Activated CD8-positive, alpha-beta T cell treated with anti-CD3 and anti-CD28 coated beads for 36 hours (primary cell): ENCODE measurements at regions of chr9 and their contacts with region 1.

Region 1: DNA sequence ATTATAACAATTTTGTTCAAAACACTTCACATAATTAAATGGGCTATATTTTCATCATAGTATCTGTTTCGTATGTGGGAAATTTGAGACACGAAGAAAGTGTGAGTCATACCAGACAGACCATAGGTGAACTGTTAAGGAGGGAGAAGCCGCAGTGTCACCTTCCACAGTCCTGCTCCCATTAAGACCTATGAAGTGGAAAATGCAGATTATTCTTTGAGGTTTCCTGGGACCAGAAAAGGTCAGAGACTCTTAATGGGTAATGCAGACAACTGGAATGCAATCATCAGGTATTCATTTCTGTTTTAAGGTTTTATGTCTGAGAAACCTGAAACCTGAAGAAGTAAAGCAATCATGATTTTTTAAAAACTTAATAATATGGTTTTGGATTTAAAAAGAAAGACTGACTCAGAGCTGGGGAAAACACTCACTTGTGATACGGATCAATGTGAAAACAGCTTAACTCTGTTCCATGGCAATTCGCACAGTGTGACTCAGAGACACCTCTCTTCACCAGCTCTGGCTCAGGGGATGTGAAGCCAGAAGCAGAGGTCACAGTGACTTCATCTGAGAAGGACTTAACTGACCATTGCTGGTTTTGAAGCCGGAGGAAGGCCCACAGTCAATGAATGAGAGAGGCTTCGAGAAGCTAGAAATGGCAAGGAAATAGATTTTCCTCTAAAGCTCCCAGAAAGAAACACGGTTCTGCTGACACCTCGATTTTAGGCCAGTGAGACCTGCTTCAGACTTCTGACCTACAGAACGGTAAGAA is 17.2 kb upstream of the GCNT1 start:
- DNase-seq: peak; percentile 67
- ATAC-seq: peak; percentile 82
- H3K4me3 Mint-ChIP-seq: peak overlapping the region; percentile 61
- H3K27ac Mint-ChIP-seq: peak overlapping the region; percentile 87
- H3K4me1 Mint-ChIP-seq: peaks cover 46% of the 10 kb centered on the region
- H3K27me3 Mint-ChIP-seq: peaks cover 3% of the 10 kb centered on the region
- CTCF ChIP-seq: no peak

Region 2: GRCh38 chr9:76393963-76394679 is 47.6 kb before region 1 on chr9 and contains the start of gene RFK:
- CTCF ChIA-PET with region 1: interaction called, 13 read pairs
- POLR2A ChIA-PET with region 1: interaction called, 4 read pairs
- intact Hi-C with region 1: no loop called
- DNase-seq: peak; percentile 92
- ATAC-seq: peak; percentile 89
- H3K4me3 Mint-ChIP-seq: peak within 1 kb of the TSS; percentile 85
- H3K27ac Mint-ChIP-seq: peak within 1 kb of the TSS; percentile 94
- H3K4me1 Mint-ChIP-seq: peaks cover 27% of the 10 kb centered on the region
- H3K27me3 Mint-ChIP-seq: no peaks in the 10 kb centered on the region
- CTCF ChIP-seq: peak; percentile 29
- total RNA-seq, gene RFK: 6.4 to 9.3 TPM

Region 3: DNA sequence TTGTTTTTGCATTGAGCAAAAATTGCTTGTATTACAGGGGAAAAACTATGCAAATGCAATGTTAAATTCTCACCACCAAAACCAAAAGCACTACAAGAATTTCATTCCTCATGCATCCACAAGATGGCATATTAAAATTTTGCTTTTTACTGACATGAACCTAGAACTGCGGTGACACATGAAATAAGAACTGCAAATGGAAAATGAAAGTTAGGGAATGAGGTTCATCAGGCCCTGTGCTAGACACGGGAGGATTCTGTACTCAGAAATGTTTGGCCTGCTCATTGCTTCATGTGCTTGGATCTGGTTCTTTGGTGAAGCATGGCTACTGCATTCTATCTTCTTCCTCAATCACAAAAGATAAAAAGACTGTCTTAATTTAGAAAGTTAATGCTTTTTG is 38.4 kb before region 1 on chr9:
- CTCF ChIA-PET with region 1: interaction called, 11 read pairs
- POLR2A ChIA-PET with region 1: no interaction called
- intact Hi-C with region 1: loop called (anchors 2 kb)
- DNase-seq: peak; percentile 22
- ATAC-seq: peak; percentile 92
- H3K4me3 Mint-ChIP-seq: no peak overlapping the region
- H3K27ac Mint-ChIP-seq: peak overlapping the region; percentile 74
- H3K4me1 Mint-ChIP-seq: peaks cover 19% of the 10 kb centered on the region
- H3K27me3 Mint-ChIP-seq: no peaks in the 10 kb centered on the region
- CTCF ChIP-seq: peak; percentile 63

Region 4: GRCh38 chr9:76423216-76424177 is 18.2 kb before region 1 on chr9:
- CTCF ChIA-PET with region 1: interaction called, 6 read pairs
- POLR2A ChIA-PET with region 1: interaction called, 3 read pairs
- intact Hi-C with region 1: loop called (anchors 2 kb)
- DNase-seq: no peak
- ATAC-seq: peak; percentile 18
- H3K4me3 Mint-ChIP-seq: no peak overlapping the region
- H3K27ac Mint-ChIP-seq: no peak overlapping the region
- H3K4me1 Mint-ChIP-seq: peaks cover 14% of the 10 kb centered on the region
- H3K27me3 Mint-ChIP-seq: no peaks in the 10 kb centered on the region
- CTCF ChIP-seq: no peak

Region 5: DNA sequence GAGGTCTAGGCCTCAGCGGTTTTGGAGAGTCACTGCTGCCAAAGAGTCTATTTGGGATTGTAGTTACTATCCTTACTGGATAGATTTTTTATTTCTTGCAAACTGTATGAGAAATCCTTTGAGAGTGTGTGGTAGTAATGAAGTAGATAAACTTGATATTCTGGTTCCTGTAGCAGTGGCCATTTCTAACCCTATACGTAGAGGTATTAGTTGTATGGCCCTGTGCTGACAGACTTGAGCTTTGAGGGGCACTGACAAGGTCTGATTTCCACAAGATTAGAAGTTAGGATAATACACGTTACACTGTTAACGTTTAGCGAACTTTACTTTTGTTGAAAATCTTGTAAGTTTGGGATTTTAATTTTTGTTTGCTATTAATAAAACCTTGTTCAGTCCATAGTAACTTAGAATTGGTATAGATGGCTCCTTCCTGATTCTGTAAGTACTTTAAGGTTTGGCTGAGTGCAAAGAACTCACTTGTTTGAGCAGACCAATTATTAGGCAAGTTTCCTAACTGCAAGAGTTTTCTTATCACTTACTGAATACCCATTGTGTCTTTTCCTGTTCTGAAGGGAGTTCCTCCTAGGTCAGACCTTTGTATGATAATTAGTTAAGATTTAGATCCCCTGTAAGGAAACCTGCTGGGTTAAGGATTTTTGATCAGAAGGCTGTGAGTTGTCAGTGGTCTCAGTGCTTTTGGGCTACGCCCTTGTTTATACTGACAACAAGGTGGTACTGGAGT is 48.7 kb after region 1 on chr9:
- CTCF ChIA-PET with region 1: no interaction called
- POLR2A ChIA-PET with region 1: no interaction called
- intact Hi-C with region 1: no loop called
- DNase-seq: no peak
- ATAC-seq: no peak
- H3K4me3 Mint-ChIP-seq: no peak overlapping the region
- H3K27ac Mint-ChIP-seq: no peak overlapping the region
- H3K4me1 Mint-ChIP-seq: peaks cover 3% of the 10 kb centered on the region
- H3K27me3 Mint-ChIP-seq: no peaks in the 10 kb centered on the region
- CTCF ChIP-seq: no peak

Region 6: GRCh38 chr9:76576344-76576743 is 134.6 kb after region 1 on chr9:
- CTCF ChIA-PET with region 1: no interaction called
- POLR2A ChIA-PET with region 1: no interaction called
- intact Hi-C with region 1: loop called (anchors 10 kb)
- DNase-seq: peak; percentile 96
- ATAC-seq: peak; percentile 92
- H3K4me3 Mint-ChIP-seq: peak overlapping the region; percentile 38
- H3K27ac Mint-ChIP-seq: peak overlapping the region; percentile 94
- H3K4me1 Mint-ChIP-seq: peaks cover 37% of the 10 kb centered on the region
- H3K27me3 Mint-ChIP-seq: peaks cover 37% of the 10 kb centered on the region
- CTCF ChIP-seq: no peak

Region 7: GRCh38 chr9:76658535-76659231 is 216.9 kb after region 1 on chr9:
- CTCF ChIA-PET with region 1: interaction called, 19 read pairs
- POLR2A ChIA-PET with region 1: no interaction called
- intact Hi-C with region 1: no loop called
- DNase-seq: no peak
- ATAC-seq: peak; percentile 88
- H3K4me3 Mint-ChIP-seq: no peak overlapping the region
- H3K27ac Mint-ChIP-seq: no peak overlapping the region
- H3K4me1 Mint-ChIP-seq: peaks cover 29% of the 10 kb centered on the region
- H3K27me3 Mint-ChIP-seq: peaks cover 5% of the 10 kb centered on the region
- CTCF ChIP-seq: peak; percentile 70

Region 8: DNA sequence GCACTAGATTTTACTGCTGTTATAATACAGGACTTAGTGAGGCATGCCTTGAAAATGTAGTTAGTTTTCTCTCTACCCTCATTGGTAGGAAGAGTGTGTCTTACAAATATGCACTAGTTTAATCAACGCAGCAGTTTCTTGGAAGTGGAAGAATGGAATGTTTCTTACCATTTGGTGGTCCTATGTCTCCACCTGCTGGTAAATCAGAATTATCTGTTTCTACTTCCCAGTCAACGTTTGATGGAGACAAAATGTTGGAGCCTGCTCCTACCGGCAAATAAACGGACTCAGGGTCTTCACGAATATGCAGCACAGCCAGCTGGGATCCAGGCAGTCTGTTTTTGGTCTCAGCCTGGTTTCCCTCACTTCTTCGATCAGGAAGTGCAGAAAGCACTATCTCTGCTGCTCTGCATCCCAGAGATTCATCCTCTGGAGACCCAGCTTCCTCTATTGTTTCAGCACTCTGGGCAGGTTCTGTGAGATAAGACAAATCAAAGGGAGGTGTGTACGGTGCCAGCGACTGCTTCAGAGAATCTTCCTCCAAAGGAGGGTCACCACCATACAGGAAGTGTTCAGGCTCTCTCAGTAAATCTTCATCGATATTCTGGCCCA is 263.0 kb after region 1 on chr9:
- CTCF ChIA-PET with region 1: interaction called, 44 read pairs
- POLR2A ChIA-PET with region 1: no interaction called
- intact Hi-C with region 1: loop called (anchors 2 kb)
- DNase-seq: no peak
- ATAC-seq: no peak
- H3K4me3 Mint-ChIP-seq: no peak overlapping the region
- H3K27ac Mint-ChIP-seq: no peak overlapping the region
- H3K4me1 Mint-ChIP-seq: no peaks in the 10 kb centered on the region
- H3K27me3 Mint-ChIP-seq: peaks cover 21% of the 10 kb centered on the region
- CTCF ChIP-seq: peak; percentile 83

Region 9: DNA sequence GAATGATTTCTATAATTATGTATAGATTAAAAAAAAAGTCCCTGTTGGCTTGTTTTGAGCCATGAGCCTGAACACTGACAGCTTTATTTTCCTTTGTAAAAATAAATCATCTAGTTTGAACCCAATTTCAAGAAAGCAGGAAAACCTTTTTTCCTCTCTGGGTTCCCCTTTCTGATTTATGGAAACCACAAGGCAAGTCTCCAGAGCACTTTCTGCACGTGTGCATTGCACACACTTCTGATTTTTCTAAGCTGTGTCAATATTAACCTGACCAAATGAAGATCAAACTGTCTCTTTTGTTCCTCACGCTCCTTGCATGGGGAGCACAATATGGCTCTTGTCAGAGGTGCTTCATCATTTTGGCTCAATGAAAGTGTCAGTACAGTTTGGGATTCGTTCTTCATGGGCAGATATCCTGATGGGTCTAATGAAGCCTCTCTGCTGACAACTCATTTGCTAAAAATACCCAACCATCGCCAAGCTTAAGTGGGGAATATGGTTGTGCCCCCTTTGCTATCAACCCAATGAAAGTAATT is 283.3 kb after region 1 on chr9:
- CTCF ChIA-PET with region 1: no interaction called
- POLR2A ChIA-PET with region 1: no interaction called
- intact Hi-C with region 1: no loop called
- DNase-seq: no peak
- ATAC-seq: no peak
- H3K4me3 Mint-ChIP-seq: no peak overlapping the region
- H3K27ac Mint-ChIP-seq: no peak overlapping the region
- H3K4me1 Mint-ChIP-seq: no peaks in the 10 kb centered on the region
- H3K27me3 Mint-ChIP-seq: peaks cover 11% of the 10 kb centered on the region
- CTCF ChIP-seq: no peak